Heart left ventricle (tissue), 16 donors: ENCODE measurements at regions of chr1 and their contacts with region 1.

Region 1: GRCh38 chr1:84753516-84754385 is 63.5 kb upstream of the SSX2IP start:
- DNase-seq: peak; percentile 54 to 72 (median 68)
- ATAC-seq: peak; percentile 84 to 92 (median 90)
- H3K4me3 ChIP-seq: no peak overlapping the region
- H3K27ac ChIP-seq: no peak overlapping the region
- H3K4me1 ChIP-seq: peaks cover 0 to 15% (median 3%) of the 10 kb centered on the region in 12 donors
- H3K27me3 ChIP-seq: peaks cover 0 to 3% (median 0%) of the 10 kb centered on the region in 9 donors
- CTCF ChIP-seq: peak; percentile 83 to 93 (median 88)
- POLR2A ChIP-seq: no peak

Region 2: DNA sequence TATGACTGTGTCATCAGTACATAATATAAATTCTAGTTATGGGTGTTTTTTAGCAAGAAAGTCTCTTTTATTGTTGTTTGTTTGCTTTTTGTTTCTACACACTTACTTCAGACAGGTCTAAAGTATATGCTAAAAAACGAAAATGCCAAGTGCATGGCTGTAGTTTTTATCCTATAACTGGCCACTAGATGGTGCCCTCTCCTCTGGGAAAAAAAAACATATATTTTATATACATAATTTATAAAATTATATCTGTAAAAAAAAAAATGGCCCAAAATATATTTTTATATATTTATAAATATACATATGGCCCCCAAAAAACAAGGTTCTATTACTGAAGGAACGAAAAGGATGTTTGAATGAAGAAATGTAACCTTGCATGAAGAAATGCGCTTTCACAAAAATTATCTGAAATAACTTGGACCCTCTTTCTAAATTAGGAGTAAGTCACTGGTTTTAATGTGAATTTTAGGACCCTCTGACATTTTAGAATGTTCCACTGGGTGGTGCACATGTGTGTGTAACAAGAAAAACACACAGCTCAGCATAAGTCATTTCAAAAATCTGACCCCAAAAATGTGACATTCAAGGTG is 848.3 kb before region 1 on chr1:
- intact Hi-C with region 1: loop called in 3 of 10 experiments (anchors 5 to 10 kb)
- DNase-seq: no peak
- ATAC-seq: no peak
- H3K4me3 ChIP-seq: no peak overlapping the region
- H3K27ac ChIP-seq: no peak overlapping the region
- H3K4me1 ChIP-seq: peaks cover 0 to 3% (median 0%) of the 10 kb centered on the region in 12 donors
- H3K27me3 ChIP-seq: no peaks in the 10 kb centered on the region
- CTCF ChIP-seq: peak; percentile 50 to 78 (median 64)
- POLR2A ChIP-seq: no peak

Region 3: DNA sequence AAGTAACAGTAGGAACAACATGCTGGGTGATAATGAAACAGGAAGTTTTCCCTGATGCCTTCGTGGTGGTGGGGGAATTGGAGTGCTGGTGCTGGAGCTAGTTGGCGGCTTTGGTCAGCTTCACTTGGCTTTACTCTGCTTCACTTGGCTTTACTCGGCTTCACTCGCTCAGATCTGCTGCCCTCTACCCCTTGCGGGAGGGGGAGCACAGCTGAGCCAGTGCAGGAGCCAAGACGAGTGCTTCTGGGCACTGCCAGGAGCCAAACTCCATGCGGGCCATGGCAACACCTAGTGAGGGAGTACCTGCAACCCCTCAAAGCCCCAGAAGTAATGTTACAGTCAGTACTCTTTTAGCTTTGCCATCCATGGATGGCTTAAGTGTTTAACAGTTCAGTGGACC is 620.3 kb before region 1 on chr1:
- intact Hi-C with region 1: loop called in 1 of 10 experiments (anchors 10 kb)
- DNase-seq: peak in 1 of 5 donors; percentile 12
- ATAC-seq: no peak
- H3K4me3 ChIP-seq: no peak overlapping the region
- H3K27ac ChIP-seq: no peak overlapping the region
- H3K4me1 ChIP-seq: no peaks in the 10 kb centered on the region
- H3K27me3 ChIP-seq: no peaks in the 10 kb centered on the region
- CTCF ChIP-seq: no peak
- POLR2A ChIP-seq: no peak

Region 4: GRCh38 chr1:84433258-84434080 is 320.3 kb before region 1 on chr1:
- intact Hi-C with region 1: loop called in 5 of 10 experiments (anchors 5 to 10 kb)
- DNase-seq: peak in 3 of 5 donors; percentile 29 to 41 (median 40)
- ATAC-seq: peak; percentile 69 to 86 (median 75)
- H3K4me3 ChIP-seq: peak overlapping the region in 10 of 12 donors; percentile 17 to 45 (median 34)
- H3K27ac ChIP-seq: no peak overlapping the region
- H3K4me1 ChIP-seq: peaks cover 0 to 47% (median 6%) of the 10 kb centered on the region in 12 donors
- H3K27me3 ChIP-seq: no peaks in the 10 kb centered on the region
- CTCF ChIP-seq: peak; percentile 53 to 82 (median 72)
- POLR2A ChIP-seq: no peak

Region 5: DNA sequence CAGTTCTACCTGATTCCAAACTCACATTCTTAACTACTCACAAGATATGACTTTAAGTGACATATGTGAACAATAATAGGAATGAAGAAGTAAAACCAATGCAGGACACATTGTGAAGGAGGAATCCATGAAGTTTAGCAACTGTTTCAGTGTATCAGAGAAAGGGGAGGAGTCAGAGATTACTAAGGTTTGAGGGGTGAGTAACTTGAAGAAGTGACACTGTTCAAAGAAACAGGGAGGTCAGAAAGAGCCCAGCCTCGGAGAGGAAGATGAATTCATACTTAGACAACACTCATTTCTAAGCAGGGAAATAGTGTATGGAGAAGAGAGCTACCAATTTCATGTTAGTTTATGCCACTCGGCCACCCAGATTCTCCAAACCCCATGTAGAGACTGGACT is 302.8 kb before region 1 on chr1:
- intact Hi-C with region 1: loop called in 1 of 10 experiments (anchors 10 kb)
- DNase-seq: no peak
- ATAC-seq: no peak
- H3K4me3 ChIP-seq: no peak overlapping the region
- H3K27ac ChIP-seq: no peak overlapping the region
- H3K4me1 ChIP-seq: no peaks in the 10 kb centered on the region
- H3K27me3 ChIP-seq: peaks cover 0 to 15% (median 0%) of the 10 kb centered on the region in 9 donors
- CTCF ChIP-seq: no peak
- POLR2A ChIP-seq: no peak

Region 6: DNA sequence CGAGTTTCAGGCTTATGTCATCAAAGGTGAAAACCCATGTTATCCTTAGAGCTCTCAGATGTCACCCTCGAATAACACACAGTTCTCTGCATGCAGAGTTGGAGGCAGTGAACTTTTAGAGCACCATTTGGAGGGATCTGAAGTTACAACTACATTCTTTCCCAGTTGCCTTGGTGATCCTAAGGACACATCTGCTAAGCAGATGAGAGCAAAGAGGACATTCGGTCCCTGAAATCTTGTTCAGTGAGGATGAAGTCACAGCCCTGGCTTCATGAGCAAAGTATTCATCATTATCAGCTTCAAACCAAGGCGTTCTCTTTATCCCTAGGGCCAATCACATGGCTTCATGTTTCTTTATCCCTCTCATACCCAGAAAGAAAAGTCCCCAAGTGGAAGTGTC is 266.2 kb after region 1 on chr1:
- intact Hi-C with region 1: no loop called
- DNase-seq: no peak
- ATAC-seq: no peak
- H3K4me3 ChIP-seq: no peak overlapping the region
- H3K27ac ChIP-seq: no peak overlapping the region
- H3K4me1 ChIP-seq: no peaks in the 10 kb centered on the region
- H3K27me3 ChIP-seq: no peaks in the 10 kb centered on the region
- CTCF ChIP-seq: no peak
- POLR2A ChIP-seq: no peak